Activated CD4-positive, alpha-beta memory T cell treated with anti-CD3 and anti-CD28 coated beads for 36 hours (primary cell): ENCODE measurements at regions of chr10 and their contacts with region 1.

Region 1: DNA sequence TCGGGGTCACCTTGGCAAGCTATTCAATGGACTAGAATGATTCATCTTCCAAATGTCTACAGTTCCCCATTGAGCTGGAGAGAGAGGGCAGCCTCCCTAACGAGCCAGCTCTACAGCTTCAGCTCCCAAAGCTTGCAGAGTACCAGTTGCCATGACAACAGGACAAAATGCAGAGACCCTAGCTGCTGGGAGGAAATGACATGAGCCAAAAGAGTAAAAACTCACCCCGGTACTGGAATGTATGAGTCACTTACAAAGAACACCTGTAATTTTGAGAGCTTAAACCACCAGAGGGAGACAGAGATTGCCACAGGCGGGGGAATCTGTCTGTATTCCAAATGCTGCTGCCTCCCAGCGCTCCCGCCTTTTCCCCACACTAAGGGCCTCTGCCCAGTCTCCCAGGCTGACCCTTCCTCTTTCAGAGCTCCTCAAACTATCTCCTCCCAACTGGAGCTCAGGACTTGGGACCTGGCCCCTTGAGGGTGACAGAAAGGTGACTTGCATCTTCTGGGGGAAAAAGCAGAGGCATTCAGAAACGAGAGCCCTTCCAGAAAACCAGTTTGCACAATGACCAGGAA is 95.5 kb downstream of the CUL2 start:
- DNase-seq: peak; percentile 69
- H3K4me3 Mint-ChIP-seq: no peak overlapping the region
- H3K27ac Mint-ChIP-seq: no peak overlapping the region
- H3K4me1 Mint-ChIP-seq: peaks cover 11% of the 10 kb centered on the region
- H3K27me3 Mint-ChIP-seq: no peaks in the 10 kb centered on the region

Region 2: GRCh38 chr10:34666008-34666705 is 328.5 kb before region 1 on chr10:
- CTCF ChIA-PET with region 1: interaction called, 12 read pairs
- POLR2A ChIA-PET with region 1: no interaction called
- intact Hi-C with region 1: loop called (anchors 10 kb)
- DNase-seq: no peak
- H3K4me3 Mint-ChIP-seq: no peak overlapping the region
- H3K27ac Mint-ChIP-seq: no peak overlapping the region
- H3K4me1 Mint-ChIP-seq: no peaks in the 10 kb centered on the region
- H3K27me3 Mint-ChIP-seq: no peaks in the 10 kb centered on the region

Region 3: DNA sequence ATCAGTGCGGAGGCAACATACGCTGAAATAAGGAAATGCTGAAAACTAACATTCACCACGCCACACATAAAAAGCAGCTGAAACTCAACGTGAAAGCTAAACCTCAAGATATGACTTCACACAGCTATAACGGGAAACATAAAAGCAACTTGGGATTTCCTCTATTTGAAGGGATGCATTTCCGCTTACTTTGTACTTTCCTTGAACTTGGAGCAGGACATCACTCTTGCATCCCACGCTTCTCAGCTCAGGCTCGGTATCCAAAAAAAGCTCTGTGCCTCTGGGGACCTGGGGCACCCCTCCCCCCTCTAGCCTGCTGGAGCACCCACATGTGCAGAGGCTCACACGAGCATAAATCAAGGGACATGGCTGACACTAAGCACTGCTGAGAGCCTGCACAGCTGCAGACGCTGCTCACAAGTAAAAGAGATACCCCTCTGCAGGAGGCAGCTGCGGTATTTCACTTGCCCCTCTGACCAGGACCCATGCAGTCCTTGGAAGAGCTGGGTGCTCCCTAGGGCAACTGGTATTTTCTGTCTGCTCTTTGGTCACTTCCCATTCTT is 213.8 kb before region 1 on chr10:
- CTCF ChIA-PET with region 1: no interaction called
- POLR2A ChIA-PET with region 1: no interaction called
- intact Hi-C with region 1: no loop called
- DNase-seq: no peak
- H3K4me3 Mint-ChIP-seq: no peak overlapping the region
- H3K27ac Mint-ChIP-seq: no peak overlapping the region
- H3K4me1 Mint-ChIP-seq: peaks cover 3% of the 10 kb centered on the region
- H3K27me3 Mint-ChIP-seq: peaks cover 20% of the 10 kb centered on the region

Region 4: GRCh38 chr10:35027567-35027966 is 32.9 kb after region 1 on chr10:
- CTCF ChIA-PET with region 1: interaction called, 19 read pairs
- POLR2A ChIA-PET with region 1: no interaction called
- intact Hi-C with region 1: loop called (anchors 2 kb)
- DNase-seq: no peak
- H3K4me3 Mint-ChIP-seq: no peak overlapping the region
- H3K27ac Mint-ChIP-seq: no peak overlapping the region
- H3K4me1 Mint-ChIP-seq: no peaks in the 10 kb centered on the region
- H3K27me3 Mint-ChIP-seq: no peaks in the 10 kb centered on the region

Region 5: GRCh38 chr10:35090162-35090954 is 95.7 kb after region 1 on chr10 and contains the start of gene CUL2:
- CTCF ChIA-PET with region 1: interaction called, 8 read pairs
- POLR2A ChIA-PET with region 1: no interaction called
- intact Hi-C with region 1: loop called (anchors 2 kb)
- DNase-seq: peak; percentile 94
- H3K4me3 Mint-ChIP-seq: peak within 1 kb of the TSS; percentile 95
- H3K27ac Mint-ChIP-seq: peak within 1 kb of the TSS; percentile 94
- H3K4me1 Mint-ChIP-seq: peaks cover 50% of the 10 kb centered on the region
- H3K27me3 Mint-ChIP-seq: no peaks in the 10 kb centered on the region
- total RNA-seq, gene CUL2: 39.7 to 43.3 TPM

Region 6: GRCh38 chr10:35218339-35218955 is 223.8 kb after region 1 on chr10:
- CTCF ChIA-PET with region 1: interaction called, 17 read pairs
- POLR2A ChIA-PET with region 1: no interaction called
- intact Hi-C with region 1: loop called (anchors 1 kb)
- DNase-seq: peak; percentile 90
- H3K4me3 Mint-ChIP-seq: peak overlapping the region; percentile 43
- H3K27ac Mint-ChIP-seq: peak overlapping the region; percentile 81
- H3K4me1 Mint-ChIP-seq: peaks cover 48% of the 10 kb centered on the region
- H3K27me3 Mint-ChIP-seq: no peaks in the 10 kb centered on the region

Region 7: GRCh38 chr10:35642027-35642792 is 647.6 kb after region 1 on chr10 and contains the start of gene FZD8:
- CTCF ChIA-PET with region 1: no interaction called
- POLR2A ChIA-PET with region 1: no interaction called
- intact Hi-C with region 1: loop called (anchors 10 kb)
- DNase-seq: peak; percentile 83
- H3K4me3 Mint-ChIP-seq: peak within 1 kb of the TSS; percentile 78
- H3K27ac Mint-ChIP-seq: no peak within 1 kb of the TSS
- H3K4me1 Mint-ChIP-seq: peaks cover 27% of the 10 kb centered on the region
- H3K27me3 Mint-ChIP-seq: peaks cover 34% of the 10 kb centered on the region
- total RNA-seq, gene FZD8: 0.31 to 0.45 TPM